Dorsolateral prefrontal cortex (tissue), 120 donors: ENCODE measurements at regions of chr1 and their contacts with region 1.

Region 1: GRCh38 chr1:156383023-156383422 is 14.0 kb downstream of the RHBG start:
- DNase-seq: peak; percentile 67 to 86 (median 82)
- H3K4me3 ChIP-seq: no peak overlapping the region
- H3K27ac ChIP-seq: peak overlapping the region in 17 of 59 donors; percentile 4 to 76 (median 24)
- H3K27me3 ChIP-seq: peaks cover 0 to 2% (median 0%) of the 10 kb centered on the region in 45 donors
- CTCF ChIP-seq: peak; percentile 64 to 98 (median 90)

Region 2: DNA sequence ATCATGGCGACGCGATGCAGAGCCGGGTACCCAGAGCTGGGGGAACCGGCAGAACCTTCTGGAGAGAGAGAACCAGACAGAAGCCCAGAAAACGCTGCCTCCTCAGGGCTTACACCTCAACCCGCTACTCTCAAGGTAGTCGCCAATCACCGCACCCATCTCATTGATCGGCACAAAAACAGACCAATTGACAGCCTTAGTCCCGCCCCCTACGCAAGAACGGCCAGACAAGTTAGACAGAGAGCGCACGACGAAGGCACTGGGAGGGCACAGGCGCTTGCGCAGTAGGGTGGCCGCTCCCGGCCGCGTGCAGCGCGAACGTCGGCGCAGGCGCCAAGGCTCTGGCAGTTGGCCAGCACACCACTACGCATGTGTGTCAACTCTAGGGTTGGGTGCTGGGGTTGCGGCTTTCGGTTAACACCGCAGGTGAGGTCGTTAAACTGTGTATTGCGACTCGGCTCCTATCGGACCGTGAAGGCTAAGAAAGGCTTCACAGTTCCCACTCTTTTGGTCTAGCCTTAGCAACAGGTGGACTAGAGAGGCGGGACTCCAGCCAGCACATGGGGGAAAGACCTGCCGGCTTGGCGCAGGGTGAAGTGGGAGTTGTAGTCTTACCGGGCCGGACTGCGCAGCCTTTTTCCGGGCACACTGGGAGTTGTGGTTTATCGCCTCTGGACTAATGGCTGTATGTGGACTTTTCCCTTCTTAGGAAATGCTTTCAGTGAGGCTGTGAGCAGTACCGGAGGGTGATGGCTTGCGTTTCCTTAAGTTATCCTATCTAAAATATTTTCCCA is 44.6 kb before region 1 on chr1 and contains the starts of genes CCT3 and TSACC:
- intact Hi-C with region 1: loop called in 1 of 2 experiments (anchors 5 kb)
- DNase-seq: peak; percentile 91 to 100 (median 98)
- H3K4me3 ChIP-seq: peak within 1 kb of the TSS; percentile 46 to 100 (median 89)
- H3K27ac ChIP-seq: peak within 1 kb of the TSS; percentile 5 to 99 (median 93)
- H3K27me3 ChIP-seq: no peaks in the 10 kb centered on the region
- CTCF ChIP-seq: peak in 16 of 56 donors; percentile 2 to 30 (median 14)
- total RNA-seq, gene CCT3: 93.9 to 244 (median 146) TPM
- total RNA-seq, gene TSACC: 0.67 to 1.6 (median 1.1) TPM in 8 of 120 experiments, not detected in the others

Region 3: GRCh38 chr1:156414461-156415064 is 31.5 kb after region 1 on chr1:
- intact Hi-C with region 1: loop called (anchors 1 kb)
- DNase-seq: no peak
- H3K4me3 ChIP-seq: peak overlapping the region in 23 of 59 donors; percentile 4 to 79 (median 39)
- H3K27ac ChIP-seq: peak overlapping the region in 57 of 59 donors; percentile 2 to 100 (median 99)
- H3K27me3 ChIP-seq: peaks cover 0 to 14% (median 0%) of the 10 kb centered on the region in 45 donors
- CTCF ChIP-seq: peak in 1 of 56 donors; percentile 9

Region 4: DNA sequence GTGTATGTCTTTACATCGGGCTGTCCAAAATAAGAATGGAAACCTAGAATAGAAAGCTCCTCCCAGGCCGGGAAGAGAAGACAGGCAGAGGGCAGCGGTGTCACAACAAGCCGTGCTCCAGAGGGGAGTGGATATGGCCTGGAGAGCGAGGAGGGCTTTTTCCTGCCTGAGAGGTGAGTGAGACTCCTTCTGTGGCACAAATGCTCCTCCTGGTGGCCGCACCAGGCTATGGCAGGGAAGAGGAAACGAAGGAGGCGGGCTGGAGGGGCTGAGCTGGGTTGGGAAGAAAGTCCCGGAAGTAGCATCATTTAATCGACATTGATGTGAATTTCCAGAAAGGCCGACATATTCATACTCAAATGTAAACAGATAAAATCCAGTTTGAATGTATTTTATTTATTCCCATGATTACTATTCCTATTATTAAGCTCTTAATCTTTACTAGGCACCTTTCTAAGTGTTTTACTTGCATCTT is 62.8 kb after region 1 on chr1:
- intact Hi-C with region 1: loop called (anchors 1 kb)
- DNase-seq: peak; percentile 78 to 90 (median 85)
- H3K4me3 ChIP-seq: peak overlapping the region in 23 of 59 donors; percentile 0 to 43 (median 27)
- H3K27ac ChIP-seq: peak overlapping the region in 7 of 59 donors; percentile 0 to 55 (median 34)
- H3K27me3 ChIP-seq: peaks cover 0 to 11% (median 0%) of the 10 kb centered on the region in 45 donors
- CTCF ChIP-seq: peak; percentile 83 to 100 (median 98)

Region 5: DNA sequence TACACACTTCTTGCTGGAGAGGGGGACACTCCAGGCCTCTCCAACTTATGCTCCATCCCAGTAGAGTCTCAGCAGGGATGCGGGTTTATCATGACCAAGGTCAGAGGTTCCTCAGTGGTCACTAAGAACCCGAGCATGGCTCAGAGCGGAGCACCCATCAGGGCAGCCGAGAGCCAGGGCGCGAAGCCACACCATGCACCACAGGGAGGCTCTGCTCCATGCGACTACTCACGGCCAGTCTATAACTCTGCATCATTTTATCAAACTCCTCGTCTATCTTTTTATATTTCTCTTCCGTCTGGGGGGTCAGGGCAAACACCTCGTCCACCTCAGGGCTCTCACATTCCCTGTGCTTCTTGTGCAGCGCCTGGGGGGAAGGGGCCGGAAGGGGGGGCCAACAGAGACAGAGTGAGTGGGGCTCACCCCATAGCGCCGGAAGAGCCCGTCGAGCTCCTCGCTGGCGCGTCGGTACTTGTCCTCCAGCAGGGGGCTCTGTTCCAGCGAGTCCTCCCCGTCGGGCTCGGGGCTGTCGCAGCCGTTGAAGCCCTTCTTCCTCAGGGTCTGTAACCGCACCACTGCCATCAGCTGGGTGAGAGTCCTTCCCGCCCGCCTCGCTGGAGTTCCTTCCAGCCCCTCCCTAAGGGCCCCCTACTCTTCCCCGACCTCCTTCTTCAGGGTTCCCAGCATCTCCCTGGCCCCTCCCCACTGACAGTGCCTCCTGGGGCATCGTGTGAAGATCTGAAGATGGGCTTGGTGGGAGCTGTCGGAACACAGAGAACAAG is 97.6 kb after region 1 on chr1:
- intact Hi-C with region 1: no loop called
- DNase-seq: peak in 4 of 10 donors; percentile 52 to 69 (median 64)
- H3K4me3 ChIP-seq: peak overlapping the region in 2 of 59 donors; percentile 4 to 9
- H3K27ac ChIP-seq: peak overlapping the region in 58 of 59 donors; percentile 17 to 100 (median 92)
- H3K27me3 ChIP-seq: no peaks in the 10 kb centered on the region
- CTCF ChIP-seq: peak; percentile 29 to 84 (median 69)

Region 6: DNA sequence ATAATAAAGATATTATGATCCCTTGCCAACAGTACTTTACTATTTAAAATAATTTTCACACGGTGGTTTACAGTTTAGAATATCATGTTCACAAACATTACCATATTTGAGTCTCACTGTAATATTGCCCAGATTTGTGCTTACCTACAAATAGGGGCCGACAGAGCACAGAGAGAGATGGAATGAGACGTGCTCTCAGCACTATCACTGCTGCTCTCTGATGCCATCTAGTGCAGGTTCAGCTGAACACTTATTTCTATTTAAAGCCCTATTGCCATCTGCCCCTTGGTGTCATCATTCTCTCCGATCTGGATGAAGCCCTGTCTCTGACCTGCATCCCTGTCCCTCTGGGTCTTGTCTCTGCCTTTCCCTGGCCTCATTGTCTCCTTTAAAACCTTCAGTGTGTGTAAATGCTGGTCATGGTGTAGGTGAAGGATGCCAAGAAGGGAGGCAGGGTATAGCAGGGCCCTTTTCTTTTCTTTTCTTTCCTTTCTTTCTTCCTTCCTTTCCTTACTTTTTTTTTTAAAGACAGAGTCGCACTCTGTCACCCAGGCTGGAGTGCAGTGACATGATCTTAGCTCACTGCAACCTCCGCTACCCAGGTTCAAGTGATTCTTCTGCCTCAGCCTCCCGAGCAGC is 225.1 kb after region 1 on chr1:
- intact Hi-C with region 1: loop called in 1 of 2 experiments (anchors 5 kb)
- DNase-seq: peak in 5 of 10 donors; percentile 42 to 74 (median 64)
- H3K4me3 ChIP-seq: peak overlapping the region in 11 of 59 donors; percentile 3 to 38 (median 12)
- H3K27ac ChIP-seq: peak overlapping the region in 57 of 59 donors; percentile 22 to 93 (median 85)
- H3K27me3 ChIP-seq: no peaks in the 10 kb centered on the region
- CTCF ChIP-seq: peak; percentile 58 to 95 (median 81)

Region 7: GRCh38 chr1:156641761-156642264 is 258.8 kb after region 1 on chr1 and contains the start of gene BCAN:
- intact Hi-C with region 1: no loop called
- DNase-seq: peak in 9 of 10 donors; percentile 44 to 84 (median 78)
- H3K4me3 ChIP-seq: peak within 1 kb of the TSS; percentile 53 to 84 (median 71)
- H3K27ac ChIP-seq: peak within 1 kb of the TSS; percentile 39 to 96 (median 89)
- H3K27me3 ChIP-seq: peaks cover 0 to 5% (median 0%) of the 10 kb centered on the region in 45 donors
- CTCF ChIP-seq: peak in 17 of 56 donors; percentile 6 to 43 (median 23)
- total RNA-seq, gene BCAN: 56.3 to 240 (median 123) TPM